ENCODE measurements at regions of chr17 and their contacts with region 1.

Region 1: GRCh38 chr17:77088455-77089123 is 52.2 kb upstream of the SEC14L1 start:
- DNase-seq: peak; percentile 98
- ATAC-seq: peak; percentile 95
- H3K4me3 ChIP-seq: peak overlapping the region; percentile 61
- H3K27ac ChIP-seq: peak overlapping the region; percentile 78
- H3K4me1 ChIP-seq: no peaks in the 10 kb centered on the region
- H3K27me3 ChIP-seq: peaks cover 2% of the 10 kb centered on the region; the same call in 1 of the 2 replicates
- CTCF ChIP-seq: peak; percentile 90
- POLR2A ChIP-seq: peak; percentile 62; the same call in 1 of the 2 replicates
- RAD21 ChIP-seq: peak; percentile 56

Region 2: DNA sequence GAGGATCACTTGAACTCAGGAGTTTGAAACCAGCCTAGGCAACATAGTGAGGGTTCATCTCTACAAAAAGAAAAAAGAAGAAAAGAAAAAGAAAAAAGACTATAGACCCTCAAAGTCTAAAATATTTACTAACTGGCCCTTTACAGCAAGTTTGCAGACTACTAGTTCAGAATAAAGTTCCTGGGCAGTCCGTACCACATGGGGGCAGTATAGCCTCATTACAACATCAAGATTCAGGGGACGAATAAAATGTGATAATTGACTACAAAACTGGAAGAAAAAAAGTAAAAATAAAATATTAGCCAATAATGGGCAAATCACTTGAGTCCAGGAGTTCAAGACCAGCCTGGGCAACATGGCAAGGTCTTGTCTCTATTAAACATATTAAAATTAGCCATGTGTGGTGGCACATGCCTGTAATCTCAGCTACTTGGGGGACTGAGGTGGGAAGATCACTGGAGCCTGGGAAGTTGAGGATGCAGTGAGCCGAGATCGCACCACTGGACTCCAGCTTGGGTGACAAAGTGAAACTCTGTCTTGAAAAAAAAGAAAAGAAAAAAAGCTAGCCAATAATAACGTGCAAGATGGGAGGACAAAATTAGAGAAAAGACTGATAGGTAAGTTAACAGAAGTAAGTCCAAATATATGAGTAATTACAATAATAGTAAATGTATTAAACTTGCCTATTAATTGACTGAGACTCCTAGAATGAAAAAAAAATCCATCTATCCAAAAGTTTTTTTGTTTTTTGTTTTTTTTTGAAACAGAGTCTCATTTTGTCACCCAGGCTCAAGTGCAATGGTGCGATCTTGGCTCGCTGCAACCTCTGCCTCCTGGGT is 77.2 kb before region 1 on chr17:
- CTCF ChIA-PET with region 1: no interaction called
- POLR2A ChIA-PET with region 1: no interaction called
- dilution Hi-C with region 1: no loop called
- in situ Hi-C with region 1: no loop called
- intact Hi-C with region 1: no loop called
- DNase-seq: peak; percentile 31
- ATAC-seq: no peak
- H3K4me3 ChIP-seq: no peak overlapping the region
- H3K27ac ChIP-seq: no peak overlapping the region
- H3K4me1 ChIP-seq: no peaks in the 10 kb centered on the region
- H3K27me3 ChIP-seq: peaks cover 9% of the 10 kb centered on the region
- CTCF ChIP-seq: peak; percentile 59
- POLR2A ChIP-seq: no peak
- RAD21 ChIP-seq: peak; percentile 63

Region 3: DNA sequence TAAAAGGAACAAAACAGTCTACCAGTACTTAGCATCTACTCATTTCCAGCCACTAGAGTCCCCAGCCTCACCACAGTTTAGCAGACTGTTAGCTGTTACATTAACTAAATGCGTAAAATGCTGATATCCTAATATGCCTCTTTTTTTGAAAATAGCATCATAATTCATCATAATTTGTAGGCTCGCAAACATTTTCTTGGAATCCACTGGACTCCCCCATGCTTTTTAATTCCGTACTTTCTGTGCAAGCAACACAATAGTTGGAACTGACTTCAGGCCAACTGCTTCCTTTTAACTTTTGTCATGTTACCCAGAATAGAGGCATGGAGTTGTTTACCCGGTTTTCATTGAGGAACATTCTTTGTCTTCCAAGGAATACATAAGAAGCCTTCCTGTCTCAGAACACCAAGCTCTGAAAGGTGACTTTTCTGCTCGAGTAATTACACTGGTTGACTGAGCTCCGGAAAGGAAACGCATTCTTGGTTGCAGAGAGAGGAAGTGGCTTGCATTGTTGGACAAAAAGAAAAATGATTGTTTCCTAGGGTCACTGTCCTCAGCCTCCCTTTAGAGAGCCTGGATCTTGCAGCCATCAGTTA is 21.3 kb after region 1 on chr17:
- CTCF ChIA-PET with region 1: no interaction called
- POLR2A ChIA-PET with region 1: no interaction called
- dilution Hi-C with region 1: no loop called
- in situ Hi-C with region 1: no loop called
- intact Hi-C with region 1: no loop called
- DNase-seq: peak; percentile 28
- ATAC-seq: peak; percentile 27
- H3K4me3 ChIP-seq: no peak overlapping the region
- H3K27ac ChIP-seq: 0 out of 2 replicates have a peak overlapping the region, but pooled peaks have one; percentile 2
- H3K4me1 ChIP-seq: peaks cover 7% of the 10 kb centered on the region
- H3K27me3 ChIP-seq: no peaks in the 10 kb centered on the region
- CTCF ChIP-seq: no peak
- POLR2A ChIP-seq: no peak
- RAD21 ChIP-seq: no peak

Region 4: GRCh38 chr17:77247048-77247541 is 158.5 kb after region 1 on chr17:
- CTCF ChIA-PET with region 1: no interaction called
- POLR2A ChIA-PET with region 1: no interaction called
- dilution Hi-C with region 1: no loop called
- in situ Hi-C with region 1: loop called (anchors 5 kb)
- intact Hi-C with region 1: loop called (anchors 1 kb)
- DNase-seq: peak; percentile 59
- ATAC-seq: peak; percentile 99
- H3K4me3 ChIP-seq: peak overlapping the region; percentile 59
- H3K27ac ChIP-seq: peak overlapping the region; percentile 50; the same call in 1 of the 2 replicates
- H3K4me1 ChIP-seq: peaks cover 4% of the 10 kb centered on the region; the same call in 1 of the 2 replicates
- H3K27me3 ChIP-seq: no peaks in the 10 kb centered on the region; the same call in 1 of the 2 replicates
- CTCF ChIP-seq: peak; percentile 85
- POLR2A ChIP-seq: 0 out of 2 replicates have a peak, but pooled peaks have one; percentile 35
- RAD21 ChIP-seq: peak; percentile 88

Region 5: GRCh38 chr17:77963441-77963840 is 874.9 kb after region 1 on chr17:
- CTCF ChIA-PET with region 1: no interaction called
- POLR2A ChIA-PET with region 1: no interaction called
- dilution Hi-C with region 1: no loop called
- in situ Hi-C with region 1: no loop called
- intact Hi-C with region 1: no loop called
- DNase-seq: peak; percentile 93
- ATAC-seq: peak; percentile 55
- H3K4me3 ChIP-seq: no peak overlapping the region
- H3K27ac ChIP-seq: no peak overlapping the region
- H3K4me1 ChIP-seq: no peaks in the 10 kb centered on the region; the same call in 1 of the 2 replicates
- H3K27me3 ChIP-seq: no peaks in the 10 kb centered on the region
- CTCF ChIP-seq: no peak
- POLR2A ChIP-seq: no peak
- RAD21 ChIP-seq: no peak

Measured in IMR-90 (cell line).